ENCODE measurements at regions of chr14 and their contacts with region 1.

Region 1: GRCh38 chr14:91114079-91115065 is 499 bp downstream of the DGLUCY start:
- DNase-seq: peak; percentile 21 to 83 (median 44)
- ATAC-seq: peak; percentile 80 to 82 (median 81)
- H3K4me3 ChIP-seq: peak overlapping the region; percentile 76 to 96
- H3K4me3 Mint-ChIP-seq: peak overlapping the region; percentile 86 to 97 (median 86)
- H3K27ac ChIP-seq: peak overlapping the region; percentile 94
- H3K27ac Mint-ChIP-seq: peak overlapping the region; percentile 92 to 94
- H3K4me1 ChIP-seq: peaks cover 22 to 61% of the 10 kb centered on the region in 2 experiments
- H3K4me1 Mint-ChIP-seq: peaks cover 76 to 78% (median 77%) of the 10 kb centered on the region in 3 donors
- H3K27me3 ChIP-seq: no peaks in the 10 kb centered on the region
- H3K27me3 Mint-ChIP-seq: no peaks in the 10 kb centered on the region

Region 2: GRCh38 chr14:90903101-90903500 is 211.3 kb before region 1 on chr14:
- CTCF ChIA-PET with region 1: interaction called, 4 to 12 read pairs
- POLR2A ChIA-PET with region 1: no interaction called
- DNase-seq: peak; percentile 13 to 77 (median 47)
- ATAC-seq: peak; percentile 64 to 90 (median 81)
- H3K4me3 ChIP-seq: no peak overlapping the region
- H3K4me3 Mint-ChIP-seq: no peak overlapping the region
- H3K27ac ChIP-seq: no peak overlapping the region
- H3K27ac Mint-ChIP-seq: peak overlapping the region in 1 of 2 donors; percentile 48
- H3K4me1 ChIP-seq: no peaks in the 10 kb centered on the region
- H3K4me1 Mint-ChIP-seq: peaks cover 0 to 3% (median 2%) of the 10 kb centered on the region in 3 donors
- H3K27me3 ChIP-seq: no peaks in the 10 kb centered on the region
- H3K27me3 Mint-ChIP-seq: no peaks in the 10 kb centered on the region

Region 3: DNA sequence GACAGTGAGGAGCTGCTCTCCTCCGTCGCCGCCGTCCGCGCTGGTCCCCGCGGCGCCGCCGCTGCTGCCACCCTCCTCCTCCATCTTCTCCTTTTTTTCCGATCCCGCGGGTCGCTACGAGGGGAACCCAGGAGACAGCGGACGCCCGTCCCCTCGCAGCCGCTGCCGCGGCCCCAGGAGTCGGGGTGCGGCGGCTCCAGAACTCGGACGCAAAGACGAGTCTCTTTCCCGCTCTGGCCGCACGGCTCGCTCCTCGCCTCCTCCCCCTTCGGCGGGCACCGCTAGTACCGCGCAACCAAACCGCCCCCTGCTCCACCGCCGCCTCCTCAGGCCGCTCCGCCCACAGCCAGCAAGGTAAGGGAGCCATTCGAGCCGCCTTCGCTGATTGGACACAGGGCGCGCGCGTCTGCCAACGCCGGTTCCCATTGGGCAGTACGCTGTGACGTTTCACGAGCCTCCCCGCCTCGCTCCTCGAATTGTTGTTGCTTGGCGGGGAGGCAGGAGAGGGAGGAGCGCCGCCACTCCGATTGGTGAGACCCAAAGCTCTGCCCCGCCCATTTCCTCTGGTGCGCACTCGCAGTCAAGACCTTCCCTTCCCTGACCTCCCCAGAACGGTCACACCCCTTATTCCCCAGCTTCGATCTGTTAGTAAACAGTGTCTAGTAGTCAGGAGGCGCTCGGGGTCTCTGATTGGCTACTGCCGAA is 53.9 kb before region 1 on chr14 and contains the start of gene RPS6KA5:
- CTCF ChIA-PET with region 1: interaction called in 1 of 2 experiments, 17 read pairs
- POLR2A ChIA-PET with region 1: interaction called, 5 to 7 read pairs
- DNase-seq: peak; percentile 97 to 100 (median 100)
- ATAC-seq: peak; percentile 83 to 85 (median 84)
- H3K4me3 ChIP-seq: peak within 1 kb of the TSS; percentile 79 to 80
- H3K4me3 Mint-ChIP-seq: peak within 1 kb of the TSS in 2 of 3 donors; percentile 83 to 88
- H3K27ac ChIP-seq: peak within 1 kb of the TSS; percentile 87
- H3K27ac Mint-ChIP-seq: peak within 1 kb of the TSS; percentile 49 to 58
- H3K4me1 ChIP-seq: peaks cover 41 to 42% of the 10 kb centered on the region in 2 experiments
- H3K4me1 Mint-ChIP-seq: peaks cover 58 to 65% (median 63%) of the 10 kb centered on the region in 3 donors
- H3K27me3 ChIP-seq: no peaks in the 10 kb centered on the region
- H3K27me3 Mint-ChIP-seq: no peaks in the 10 kb centered on the region
- total RNA-seq, gene RPS6KA5: 28.8 to 39.8 (median 35.3) TPM

Region 4: GRCh38 chr14:91089958-91090535 is 24.3 kb before region 1 on chr14:
- CTCF ChIA-PET with region 1: no interaction called
- POLR2A ChIA-PET with region 1: no interaction called
- DNase-seq: no peak
- ATAC-seq: no peak
- H3K4me3 ChIP-seq: no peak overlapping the region
- H3K4me3 Mint-ChIP-seq: no peak overlapping the region
- H3K27ac ChIP-seq: no peak overlapping the region
- H3K27ac Mint-ChIP-seq: no peak overlapping the region
- H3K4me1 ChIP-seq: no peaks in the 10 kb centered on the region
- H3K4me1 Mint-ChIP-seq: peaks cover 9 to 12% (median 11%) of the 10 kb centered on the region in 3 donors
- H3K27me3 ChIP-seq: peaks cover 0 to 17% of the 10 kb centered on the region in 2 experiments
- H3K27me3 Mint-ChIP-seq: peaks cover 0 to 2% of the 10 kb centered on the region in 2 donors

Region 5: GRCh38 chr14:91138511-91139359 is 24.4 kb after region 1 on chr14:
- CTCF ChIA-PET with region 1: interaction called in 1 of 2 experiments, 11 read pairs
- POLR2A ChIA-PET with region 1: no interaction called
- DNase-seq: peak in 31 of 35 experiments; percentile 11 to 71 (median 34)
- ATAC-seq: peak in 2 of 4 experiments; percentile 24 to 52
- H3K4me3 ChIP-seq: no peak overlapping the region
- H3K4me3 Mint-ChIP-seq: no peak overlapping the region
- H3K27ac ChIP-seq: no peak overlapping the region
- H3K27ac Mint-ChIP-seq: no peak overlapping the region
- H3K4me1 ChIP-seq: peaks cover 4 to 17% of the 10 kb centered on the region in 2 experiments
- H3K4me1 Mint-ChIP-seq: peaks cover 32 to 45% (median 35%) of the 10 kb centered on the region in 3 donors
- H3K27me3 ChIP-seq: no peaks in the 10 kb centered on the region
- H3K27me3 Mint-ChIP-seq: no peaks in the 10 kb centered on the region